Esophagus squamous epithelium (tissue), 5 donors: ENCODE measurements at regions of chr1 and their contacts with region 1.

Region 1: DNA sequence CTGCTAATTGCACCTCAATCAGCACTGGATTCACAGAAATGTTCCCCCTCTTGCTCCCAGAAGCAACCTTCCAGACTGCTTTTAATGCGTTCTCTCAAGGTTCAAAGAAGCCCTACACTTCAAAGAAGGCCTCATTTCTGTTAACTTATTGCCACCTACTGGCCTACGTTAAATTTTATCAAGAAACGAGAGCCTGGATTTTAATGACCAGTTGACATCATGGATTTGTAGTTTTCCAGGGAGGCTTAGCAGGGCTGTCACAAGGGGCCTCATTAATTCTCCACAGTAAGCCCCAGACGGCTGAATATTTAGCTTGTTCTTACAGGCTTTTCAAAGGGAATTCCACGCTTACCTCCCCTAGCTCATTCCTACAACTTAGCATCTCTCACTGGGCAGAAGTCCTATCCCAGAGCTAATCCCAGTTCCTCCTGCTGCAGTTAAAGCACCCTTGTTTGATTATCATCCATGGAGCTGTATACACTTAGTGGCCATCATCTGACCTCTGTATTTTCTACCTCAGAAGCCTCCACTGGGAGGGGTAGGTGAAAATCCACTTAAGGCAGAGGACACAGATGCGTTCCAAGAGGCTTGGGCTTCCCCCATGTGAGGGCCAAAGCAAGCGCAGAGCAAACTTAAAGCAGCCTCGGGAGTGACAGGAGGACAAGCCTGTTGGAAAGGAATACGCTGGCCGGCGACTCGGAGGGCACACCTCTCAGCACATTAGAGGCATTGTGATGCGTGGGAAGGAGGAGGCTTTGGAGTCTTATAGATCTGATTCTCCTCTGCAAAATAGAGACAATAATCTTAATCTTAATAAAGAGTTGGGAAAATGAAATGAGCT is 32.2 kb upstream of the CYP4X1 start:
- DNase-seq: no peak
- H3K4me3 ChIP-seq: no peak overlapping the region
- H3K27ac ChIP-seq: no peak overlapping the region
- H3K4me1 ChIP-seq: no peaks in the 10 kb centered on the region
- H3K27me3 ChIP-seq: no peaks in the 10 kb centered on the region
- CTCF ChIP-seq: peak in 5 of 6 experiments; percentile 15 to 60 (median 28)
- POLR2A ChIP-seq: no peak

Region 2: GRCh38 chr1:46747683-46748288 is 243.5 kb before region 1 on chr1:
- intact Hi-C with region 1: loop called (anchors 10 kb)
- DNase-seq: no peak
- H3K4me3 ChIP-seq: no peak overlapping the region
- H3K27ac ChIP-seq: no peak overlapping the region
- H3K4me1 ChIP-seq: peaks cover 6 to 51% (median 7%) of the 10 kb centered on the region in 3 donors
- H3K27me3 ChIP-seq: peaks cover 0 to 24% (median 0%) of the 10 kb centered on the region in 4 donors
- CTCF ChIP-seq: peak; percentile 23 to 89 (median 78)
- POLR2A ChIP-seq: no peak